ENCODE measurements at regions of chr6 and their contacts with region 1.

Region 1: GRCh38 chr6:5143634-5144311 is 58.6 kb downstream of the PPP1R3G start:
- DNase-seq: no peak
- H3K4me3 ChIP-seq: no peak overlapping the region
- CTCF ChIP-seq: peak; percentile 86

Region 2: DNA sequence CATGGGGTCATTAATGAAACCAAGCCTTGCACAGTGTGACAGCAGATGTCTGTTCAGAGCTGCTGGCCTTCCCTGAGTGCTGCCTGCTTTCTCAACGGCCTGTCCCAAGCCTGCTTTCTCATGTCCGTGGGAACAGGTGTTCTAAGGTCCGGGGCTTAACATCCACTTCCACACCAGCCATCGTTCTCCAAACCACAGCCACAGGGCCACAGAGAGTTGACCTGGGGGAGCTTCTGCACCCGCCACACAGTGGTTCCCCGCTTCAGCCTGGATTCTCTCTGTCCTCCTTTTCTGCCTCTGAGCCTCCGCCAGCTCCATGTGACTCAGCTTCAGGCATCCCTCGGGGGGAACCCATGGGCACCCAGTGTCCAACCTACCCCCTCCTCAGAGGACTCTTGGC is 85.5 kb before region 1 on chr6:
- CTCF ChIA-PET with region 1: interaction called, 18 read pairs
- POLR2A ChIA-PET with region 1: no interaction called
- DNase-seq: no peak
- H3K4me3 ChIP-seq: no peak overlapping the region
- CTCF ChIP-seq: no peak

Region 3: GRCh38 chr6:5192135-5192794 is 48.5 kb after region 1 on chr6:
- CTCF ChIA-PET with region 1: interaction called, 15 read pairs
- POLR2A ChIA-PET with region 1: no interaction called
- DNase-seq: no peak
- H3K4me3 ChIP-seq: no peak overlapping the region
- CTCF ChIP-seq: no peak

Region 4: DNA sequence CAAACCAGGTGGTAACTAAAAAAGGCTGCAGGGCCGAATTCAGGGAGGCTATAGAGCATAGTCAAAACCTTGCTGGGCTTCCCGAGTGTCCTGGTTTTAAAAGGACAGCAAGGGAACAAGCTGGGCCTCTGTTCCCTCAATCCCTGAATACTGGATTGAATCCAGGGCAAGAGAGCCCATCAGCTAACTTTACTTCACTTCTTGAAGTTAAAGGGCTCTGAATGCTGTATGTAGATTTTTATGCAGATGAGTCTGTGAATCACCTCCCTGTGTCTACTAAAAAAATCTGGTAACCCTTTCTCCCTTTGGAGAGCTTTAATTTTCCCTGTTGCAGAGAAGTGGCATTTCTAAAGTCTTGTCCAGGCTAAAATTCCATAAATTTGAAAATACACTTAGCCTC is 87.5 kb after region 1 on chr6:
- CTCF ChIA-PET with region 1: interaction called, 12 read pairs
- POLR2A ChIA-PET with region 1: no interaction called
- DNase-seq: no peak
- H3K4me3 ChIP-seq: no peak overlapping the region
- CTCF ChIP-seq: no peak

Region 5: GRCh38 chr6:5275497-5275896 is 131.7 kb after region 1 on chr6:
- CTCF ChIA-PET with region 1: interaction called, 13 read pairs
- POLR2A ChIA-PET with region 1: no interaction called
- DNase-seq: no peak
- H3K4me3 ChIP-seq: no peak overlapping the region
- CTCF ChIP-seq: no peak

Region 6: GRCh38 chr6:5395719-5396118 is 251.9 kb after region 1 on chr6:
- CTCF ChIA-PET with region 1: interaction called, 19 read pairs
- POLR2A ChIA-PET with region 1: no interaction called
- DNase-seq: no peak
- H3K4me3 ChIP-seq: no peak overlapping the region
- CTCF ChIP-seq: no peak